Ascending aorta (tissue), 2 donors: ENCODE measurements at regions of chr21 and their contacts with region 1.

Region 1: GRCh38 chr21:33380483-33380998 is 22.7 kb upstream of the IFNGR2 start:
- DNase-seq: peak; percentile 91 to 98
- H3K4me3 ChIP-seq: no peak overlapping the region
- H3K27ac ChIP-seq: peak overlapping the region; percentile 77 to 82
- H3K4me1 ChIP-seq: peaks cover 6 to 27% of the 10 kb centered on the region in 2 donors
- H3K27me3 ChIP-seq: no peaks in the 10 kb centered on the region
- CTCF ChIP-seq: no peak

Region 2: GRCh38 chr21:33412832-33413519 is 32.4 kb after region 1 on chr21:
- intact Hi-C with region 1: no loop called
- DNase-seq: no peak
- H3K4me3 ChIP-seq: no peak overlapping the region
- H3K27ac ChIP-seq: peak overlapping the region in 1 of 2 donors; percentile 2
- H3K4me1 ChIP-seq: peaks cover 0 to 2% of the 10 kb centered on the region in 2 donors
- H3K27me3 ChIP-seq: no peaks in the 10 kb centered on the region
- CTCF ChIP-seq: no peak

Region 3: GRCh38 chr21:33434770-33435360 is 54.3 kb after region 1 on chr21:
- intact Hi-C with region 1: loop called (anchors 2 kb)
- DNase-seq: no peak
- H3K4me3 ChIP-seq: peak overlapping the region in 1 of 2 donors; percentile 23
- H3K27ac ChIP-seq: peak overlapping the region; percentile 67 to 91
- H3K4me1 ChIP-seq: peaks cover 11 to 18% of the 10 kb centered on the region in 2 donors
- H3K27me3 ChIP-seq: no peaks in the 10 kb centered on the region
- CTCF ChIP-seq: no peak